ENCODE measurements at regions of chr12 and their contacts with region 1.

Region 1: DNA sequence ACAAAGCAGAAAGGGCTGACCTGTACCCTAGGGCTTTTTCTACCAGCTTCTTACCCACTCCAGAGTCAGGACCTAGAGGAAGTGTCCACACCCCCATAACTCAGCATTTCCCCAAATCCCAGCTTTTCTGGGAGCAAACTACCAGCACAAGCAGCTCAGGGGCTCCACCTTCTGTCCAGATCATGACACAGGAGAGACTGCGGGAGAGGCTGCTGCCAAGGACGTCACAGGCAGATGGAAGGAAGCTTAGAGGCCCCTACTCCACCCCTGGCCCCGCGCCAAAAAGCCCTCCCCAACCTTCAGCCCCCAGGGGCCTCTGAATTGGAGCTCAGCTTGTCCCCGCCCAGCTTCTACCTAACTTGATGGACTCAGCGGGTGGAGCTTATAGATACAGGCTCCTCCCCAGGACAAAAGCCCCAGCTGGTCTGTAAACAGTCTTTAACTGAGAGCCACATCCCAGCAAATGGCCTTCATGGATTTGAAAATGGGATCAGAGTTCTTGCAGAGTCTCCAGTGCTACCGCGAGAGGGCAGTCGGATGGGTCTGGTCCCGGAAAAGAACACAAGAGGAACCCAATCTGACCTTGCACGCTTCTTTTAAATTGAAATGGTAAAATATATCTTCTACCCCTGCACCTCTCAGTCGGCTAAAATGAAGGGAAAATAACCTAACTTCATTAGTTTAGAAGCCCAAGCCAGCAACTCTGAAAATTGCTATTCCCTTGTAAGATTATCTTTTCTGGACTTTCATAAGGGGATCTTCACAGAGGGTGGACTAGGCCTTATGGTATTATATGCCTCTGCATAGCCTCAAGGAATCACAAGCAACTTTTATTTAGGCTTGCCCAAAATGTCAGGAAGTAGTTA is 6.8 kb upstream of the BAZ2A start:
- DNase-seq: peak; percentile 92
- H3K4me3 ChIP-seq: peak overlapping the region; percentile 90 to 95
- H3K27ac ChIP-seq: peak overlapping the region; percentile 94 to 96
- H3K4me1 ChIP-seq: peaks cover 25 to 44% of the 10 kb centered on the region in 2 experiments
- H3K27me3 ChIP-seq: no peaks in the 10 kb centered on the region
- CTCF ChIP-seq: peak; percentile 75
- EP300 ChIP-seq: 0 out of 4 replicates have a peak, but pooled peaks have one; percentile 19 to 20
- RAD21 ChIP-seq: peak; percentile 80

Region 2: GRCh38 chr12:56333679-56334489 is 303.0 kb before region 1 on chr12 and contains the start of gene PAN2:
- CTCF ChIA-PET with region 1: no interaction called
- POLR2A ChIA-PET with region 1: no interaction called
- DNase-seq: peak; percentile 93
- H3K4me3 ChIP-seq: peak within 1 kb of the TSS; percentile 61 to 73
- H3K27ac ChIP-seq: peak within 1 kb of the TSS; percentile 84 to 97
- H3K4me1 ChIP-seq: peaks cover 4 to 8% of the 10 kb centered on the region in 2 experiments; a peak in 1 of 4 replicates
- H3K27me3 ChIP-seq: no peaks in the 10 kb centered on the region
- CTCF ChIP-seq: peak; percentile 80
- EP300 ChIP-seq: no peak
- RAD21 ChIP-seq: no peak
- polyA plus RNA-seq, gene PAN2: 37.1 and 66.9 TPM in 2 replicates

Region 3: GRCh38 chr12:56510786-56511185 is 126.1 kb before region 1 on chr12:
- CTCF ChIA-PET with region 1: interaction called, 54 read pairs
- POLR2A ChIA-PET with region 1: no interaction called
- DNase-seq: no peak
- H3K4me3 ChIP-seq: no peak overlapping the region
- H3K27ac ChIP-seq: no peak overlapping the region
- H3K4me1 ChIP-seq: no peaks in the 10 kb centered on the region
- H3K27me3 ChIP-seq: no peaks in the 10 kb centered on the region
- CTCF ChIP-seq: no peak
- EP300 ChIP-seq: no peak
- RAD21 ChIP-seq: no peak

Region 4: DNA sequence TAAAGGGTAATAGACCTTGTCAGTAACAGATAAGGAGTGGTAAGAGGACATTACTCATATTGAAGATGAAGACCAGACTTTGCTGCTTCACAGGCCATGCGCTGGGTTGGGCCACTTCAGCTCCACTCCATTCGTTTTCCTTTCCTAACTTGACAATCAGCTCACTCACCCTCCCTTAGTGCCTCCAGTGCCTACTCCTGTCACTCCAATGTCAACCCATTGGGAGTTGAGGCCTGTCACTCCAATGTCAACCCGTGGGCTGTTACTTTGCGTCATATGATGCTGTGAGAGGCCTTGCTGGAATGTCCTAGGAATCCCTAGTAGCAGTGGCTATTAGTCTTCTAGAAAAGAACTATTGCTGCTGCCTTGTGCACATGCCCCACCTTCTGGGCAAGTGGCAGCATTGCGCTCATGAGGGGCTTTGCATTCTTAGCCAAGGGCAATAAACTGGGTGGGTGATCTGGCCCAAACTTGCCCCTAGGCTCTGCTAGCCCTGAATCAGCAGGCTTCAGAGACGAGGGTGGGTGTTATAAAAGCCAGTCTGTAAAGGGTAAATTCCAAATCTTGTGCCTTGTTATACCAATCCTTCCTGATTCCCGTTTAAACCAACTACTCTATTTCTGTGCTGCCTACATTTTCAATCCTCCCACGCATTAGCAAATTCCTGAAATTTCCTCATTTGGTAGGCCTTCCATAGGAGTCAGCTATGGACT is 42.8 kb before region 1 on chr12:
- CTCF ChIA-PET with region 1: interaction called, 40 read pairs
- POLR2A ChIA-PET with region 1: no interaction called
- DNase-seq: peak; percentile 76
- H3K4me3 ChIP-seq: peak overlapping the region in 1 of 2 experiments; percentile 2; a peak in 1 of 4 replicates
- H3K27ac ChIP-seq: peak overlapping the region; percentile 35 to 64; a peak in 3 of 4 replicates
- H3K4me1 ChIP-seq: peaks cover 0 to 6% of the 10 kb centered on the region in 2 experiments; a peak in 1 of 4 replicates
- H3K27me3 ChIP-seq: no peaks in the 10 kb centered on the region
- CTCF ChIP-seq: peak; percentile 89
- EP300 ChIP-seq: no peak
- RAD21 ChIP-seq: peak; percentile 72

Region 5: GRCh38 chr12:56616925-56617324 is 20.0 kb before region 1 on chr12:
- CTCF ChIA-PET with region 1: interaction called, 35 read pairs
- POLR2A ChIA-PET with region 1: no interaction called
- DNase-seq: no peak
- H3K4me3 ChIP-seq: no peak overlapping the region
- H3K27ac ChIP-seq: no peak overlapping the region
- H3K4me1 ChIP-seq: no peaks in the 10 kb centered on the region
- H3K27me3 ChIP-seq: no peaks in the 10 kb centered on the region
- CTCF ChIP-seq: no peak
- EP300 ChIP-seq: no peak
- RAD21 ChIP-seq: no peak

Region 6: DNA sequence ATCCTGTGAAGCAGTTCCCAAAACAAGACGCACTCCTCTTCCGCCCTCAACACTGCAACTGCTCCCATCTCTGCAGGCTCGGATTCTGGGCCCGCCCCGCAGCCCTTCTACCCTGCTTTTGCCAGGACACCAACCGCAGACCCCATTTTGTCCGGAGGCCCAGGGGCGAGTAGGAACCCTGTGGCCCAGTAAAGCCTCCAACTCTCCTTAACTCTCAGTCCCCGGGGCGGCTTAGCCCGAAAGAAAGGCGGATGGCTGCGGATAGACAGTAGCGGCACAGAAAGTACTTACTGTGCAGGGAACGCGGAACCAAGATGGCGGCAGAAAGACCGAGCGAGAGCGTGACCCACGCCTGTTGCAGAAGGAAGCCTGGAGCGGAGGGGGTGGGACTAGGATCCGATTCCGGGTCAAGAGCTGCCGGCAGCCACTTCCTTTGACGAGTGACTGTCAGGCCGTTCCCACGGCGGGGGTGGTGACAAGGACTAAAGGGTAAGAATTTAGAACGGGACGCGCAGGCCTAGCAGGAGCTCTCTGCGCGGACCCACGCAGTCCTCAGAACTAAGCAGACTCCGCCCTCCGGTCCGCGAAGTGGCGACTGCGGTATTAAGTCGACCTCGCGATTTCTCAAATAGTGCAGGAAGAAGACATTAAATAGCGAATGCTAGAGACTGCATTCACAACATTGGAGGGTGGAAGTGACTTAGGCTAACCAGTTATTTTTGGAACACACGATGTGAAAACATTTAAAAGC is 88.2 kb after region 1 on chr12 and contains the start of gene NACA:
- CTCF ChIA-PET with region 1: interaction called, 4 read pairs
- POLR2A ChIA-PET with region 1: interaction called, 19 read pairs
- DNase-seq: peak; percentile 94
- H3K4me3 ChIP-seq: peak within 1 kb of the TSS; percentile 92 to 94
- H3K27ac ChIP-seq: peak within 1 kb of the TSS; percentile 91 to 93
- H3K4me1 ChIP-seq: peaks cover 27 to 30% of the 10 kb centered on the region in 2 experiments
- H3K27me3 ChIP-seq: no peaks in the 10 kb centered on the region
- CTCF ChIP-seq: no peak
- EP300 ChIP-seq: no peak; a peak in 1 of 4 replicates
- RAD21 ChIP-seq: peak; percentile 3; the same call in 1 of the 2 replicates
- polyA plus RNA-seq, gene NACA: 523 and 644 TPM in 2 replicates

Measured in SK-N-SH (cell line).